Activated B cell treated with CpG ODN at 0.5 μM for 24 hours (primary cell): ENCODE measurements at regions of chr11 and their contacts with region 1.

Region 1: DNA sequence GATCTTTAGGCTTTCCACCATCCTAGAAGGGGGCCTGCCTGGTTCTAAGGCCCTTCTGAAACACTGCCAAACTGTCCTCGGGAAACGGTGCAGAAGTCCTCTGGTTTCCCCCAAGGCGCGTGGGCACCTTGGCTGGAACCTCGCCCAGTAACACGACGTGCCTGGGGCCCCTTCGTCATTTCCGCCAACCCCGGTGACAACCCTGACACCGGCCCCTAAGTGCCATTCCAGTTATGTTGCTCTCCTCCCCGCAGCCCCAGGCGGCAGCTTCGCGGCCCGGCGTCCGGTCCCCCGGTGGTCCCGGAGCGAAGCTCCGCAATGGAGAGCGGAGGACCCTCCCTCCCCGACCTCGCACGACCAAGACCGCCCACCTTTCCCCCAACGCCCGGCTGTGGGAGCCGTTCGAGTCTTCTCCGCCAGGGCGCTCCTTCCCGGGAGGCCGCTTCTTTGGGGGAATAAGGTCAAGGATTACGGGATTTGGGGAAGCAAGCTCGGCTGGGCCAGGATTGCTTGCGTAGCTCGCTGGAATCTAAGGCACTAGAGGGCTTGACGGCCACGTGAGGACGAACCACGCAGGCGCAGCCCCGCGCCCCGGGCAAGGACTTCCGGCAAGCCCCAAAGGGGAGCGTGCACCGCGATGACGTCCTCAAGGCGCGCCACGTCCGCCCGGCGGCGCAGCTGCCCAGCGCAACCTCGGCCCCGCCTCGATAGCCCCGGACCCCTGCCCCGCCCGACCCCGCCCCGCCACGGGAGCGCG is 626 bp downstream of the RNH1 start:
- DNase-seq: peak; percentile 98
- ATAC-seq: peak; percentile 70
- H3K4me3 Mint-ChIP-seq: peak overlapping the region; percentile 97
- H3K27ac Mint-ChIP-seq: peak overlapping the region; percentile 99
- H3K4me1 Mint-ChIP-seq: peaks cover 41% of the 10 kb centered on the region
- H3K27me3 Mint-ChIP-seq: no peaks in the 10 kb centered on the region
- CTCF ChIP-seq: no peak

Region 2: GRCh38 chr11:207208-207862 is 299.1 kb before region 1 on chr11 and contains the starts of genes BET1L and RIC8A:
- CTCF ChIA-PET with region 1: no interaction called
- POLR2A ChIA-PET with region 1: interaction called, 24 read pairs
- intact Hi-C with region 1: no loop called
- DNase-seq: peak; percentile 95
- ATAC-seq: peak; percentile 82
- H3K4me3 Mint-ChIP-seq: peak within 1 kb of the TSS; percentile 97
- H3K27ac Mint-ChIP-seq: peak within 1 kb of the TSS; percentile 99
- H3K4me1 Mint-ChIP-seq: peaks cover 46% of the 10 kb centered on the region
- H3K27me3 Mint-ChIP-seq: no peaks in the 10 kb centered on the region
- CTCF ChIP-seq: no peak
- total RNA-seq, gene BET1L: 44.2 and 47.0 TPM in 2 replicates
- total RNA-seq, gene RIC8A: 108 and 114 TPM in 2 replicates

Region 3: GRCh38 chr11:355581-356458 is 150.6 kb before region 1 on chr11:
- CTCF ChIA-PET with region 1: no interaction called
- POLR2A ChIA-PET with region 1: interaction called, 10 read pairs
- intact Hi-C with region 1: no loop called
- DNase-seq: peak; percentile 70
- ATAC-seq: peak; percentile 72
- H3K4me3 Mint-ChIP-seq: peak overlapping the region; percentile 77
- H3K27ac Mint-ChIP-seq: peak overlapping the region; percentile 90
- H3K4me1 Mint-ChIP-seq: peaks cover 26% of the 10 kb centered on the region
- H3K27me3 Mint-ChIP-seq: no peaks in the 10 kb centered on the region
- CTCF ChIP-seq: no peak

Region 4: GRCh38 chr11:416757-417621 is 89.4 kb before region 1 on chr11:
- CTCF ChIA-PET with region 1: no interaction called
- POLR2A ChIA-PET with region 1: interaction called, 8 read pairs
- intact Hi-C with region 1: loop called (anchors 2 kb)
- DNase-seq: peak; percentile 55
- ATAC-seq: peak; percentile 60
- H3K4me3 Mint-ChIP-seq: peak overlapping the region; percentile 79
- H3K27ac Mint-ChIP-seq: no peak overlapping the region
- H3K4me1 Mint-ChIP-seq: peaks cover 32% of the 10 kb centered on the region
- H3K27me3 Mint-ChIP-seq: no peaks in the 10 kb centered on the region
- CTCF ChIP-seq: no peak

Region 5: GRCh38 chr11:518463-519250 is 12.2 kb after region 1 on chr11:
- CTCF ChIA-PET with region 1: interaction called, 5 read pairs
- POLR2A ChIA-PET with region 1: interaction called, 10 read pairs
- intact Hi-C with region 1: loop called (anchors 1 kb)
- DNase-seq: peak; percentile 90
- ATAC-seq: peak; percentile 98
- H3K4me3 Mint-ChIP-seq: peak overlapping the region; percentile 79
- H3K27ac Mint-ChIP-seq: peak overlapping the region; percentile 83
- H3K4me1 Mint-ChIP-seq: peaks cover 5% of the 10 kb centered on the region
- H3K27me3 Mint-ChIP-seq: no peaks in the 10 kb centered on the region
- CTCF ChIP-seq: peak; percentile 71

Region 6: DNA sequence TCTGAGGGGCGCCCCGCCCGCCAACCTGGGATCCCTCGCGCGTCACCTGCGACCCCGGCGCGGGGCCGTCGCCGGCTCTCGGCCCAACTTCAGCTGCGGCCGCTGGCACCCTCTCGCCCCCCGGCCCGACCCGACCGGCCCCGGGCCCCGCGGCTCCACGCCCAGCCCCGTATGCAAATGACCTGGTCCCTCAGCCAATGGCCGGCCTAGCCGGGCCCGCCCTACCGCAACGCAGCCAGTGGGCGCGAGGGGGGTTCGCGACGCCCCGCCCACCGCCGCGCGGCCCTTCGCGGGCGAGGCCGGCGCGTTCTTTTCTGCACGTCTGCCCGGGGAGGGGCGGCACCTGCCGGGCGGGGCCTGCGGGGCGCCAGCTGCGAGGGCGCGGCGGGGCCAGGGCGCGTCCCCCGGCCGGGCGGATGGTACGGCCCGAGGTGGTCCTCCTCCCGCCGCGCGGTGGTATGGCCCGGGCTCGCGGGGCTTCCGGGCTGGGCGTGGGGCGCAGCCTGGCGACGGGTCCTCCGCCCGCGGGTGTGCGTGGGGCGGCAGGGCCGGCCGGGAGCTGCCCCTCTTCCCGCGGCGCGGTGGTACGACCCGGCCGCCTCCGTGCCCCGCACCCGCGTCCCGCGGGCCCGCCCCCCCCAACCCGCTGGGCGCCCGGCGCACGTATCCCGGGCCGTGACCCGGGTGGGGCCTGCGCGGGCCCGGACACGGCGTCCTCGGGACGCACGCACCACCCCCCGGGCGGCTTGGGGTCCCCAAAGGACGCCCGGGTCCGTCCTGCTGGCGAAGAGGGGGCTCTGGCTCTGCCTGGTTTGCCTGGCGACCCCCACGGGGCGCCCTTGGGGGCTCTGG is 62.1 kb after region 1 on chr11:
- CTCF ChIA-PET with region 1: no interaction called
- POLR2A ChIA-PET with region 1: interaction called, 9 read pairs
- intact Hi-C with region 1: loop called (anchors 2 kb)
- DNase-seq: peak; percentile 96
- ATAC-seq: peak; percentile 93
- H3K4me3 Mint-ChIP-seq: peak overlapping the region; percentile 79
- H3K27ac Mint-ChIP-seq: peak overlapping the region; percentile 41
- H3K4me1 Mint-ChIP-seq: peaks cover 7% of the 10 kb centered on the region
- H3K27me3 Mint-ChIP-seq: no peaks in the 10 kb centered on the region
- CTCF ChIP-seq: no peak

Region 7: GRCh38 chr11:695538-696248 is 189.3 kb after region 1 on chr11 and contains the start of gene TMEM80:
- CTCF ChIA-PET with region 1: no interaction called
- POLR2A ChIA-PET with region 1: interaction called, 3 read pairs
- intact Hi-C with region 1: loop called (anchors 1 kb)
- DNase-seq: peak; percentile 95
- ATAC-seq: peak; percentile 71
- H3K4me3 Mint-ChIP-seq: peak within 1 kb of the TSS; percentile 87
- H3K27ac Mint-ChIP-seq: peak within 1 kb of the TSS; percentile 94
- H3K4me1 Mint-ChIP-seq: peaks cover 46% of the 10 kb centered on the region
- H3K27me3 Mint-ChIP-seq: no peaks in the 10 kb centered on the region
- CTCF ChIP-seq: no peak
- total RNA-seq, gene TMEM80: 34.1 and 44.4 TPM in 2 replicates